ENCODE measurements at regions of chr5 and their contacts with region 1.

Region 1: DNA sequence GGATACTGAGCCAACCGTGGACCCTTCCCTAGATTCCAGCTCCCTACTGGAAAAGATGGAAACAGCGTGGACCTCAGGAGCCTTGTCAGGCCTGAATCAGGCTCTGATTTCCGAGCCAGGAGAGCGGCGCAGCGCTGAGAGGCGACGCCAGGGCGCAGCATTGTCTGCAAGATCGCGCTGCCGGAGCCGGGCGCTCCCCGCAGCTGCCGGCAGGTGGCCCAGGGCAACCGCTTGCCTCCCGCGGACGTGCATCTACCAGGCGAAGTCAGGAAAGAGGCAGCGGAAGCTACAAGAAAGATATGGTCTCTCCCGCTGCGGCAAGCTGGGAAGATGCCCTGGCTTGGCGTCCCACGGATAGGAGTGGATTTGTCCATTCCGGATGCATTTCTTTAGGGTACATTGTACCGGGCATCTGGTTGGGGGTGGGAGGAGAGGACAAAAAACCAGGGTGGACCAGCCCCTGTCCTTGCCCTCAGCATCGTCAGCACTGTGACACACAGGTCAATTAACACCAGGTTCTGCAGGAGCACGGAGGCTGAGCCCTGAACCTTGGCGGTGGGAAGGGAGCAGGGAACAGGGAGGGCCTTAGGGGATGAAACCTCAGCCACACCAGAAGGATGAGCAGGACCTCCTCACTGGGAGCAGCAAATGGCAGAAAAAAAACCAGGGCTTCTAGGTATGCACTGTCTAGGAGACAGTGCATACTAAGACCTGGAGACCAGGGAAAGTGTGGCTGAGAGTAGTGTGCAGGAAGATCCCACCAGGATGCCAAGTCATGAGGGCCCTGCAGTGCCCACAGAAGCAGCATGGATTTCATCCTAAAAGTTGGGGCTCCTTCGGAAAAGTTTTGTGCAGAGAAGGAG is 55.9 kb downstream of the SFXN1 start:
- DNase-seq: peak; percentile 97
- H3K4me3 ChIP-seq: peak overlapping the region in 1 of 8 donors; percentile 16
- H3K27ac ChIP-seq: no peak overlapping the region
- H3K4me1 ChIP-seq: peaks cover 0 to 17% (median 10%) of the 10 kb centered on the region in 6 donors
- H3K27me3 ChIP-seq: peaks cover 0 to 3% (median 0%) of the 10 kb centered on the region in 7 donors
- CTCF ChIP-seq: peak; percentile 89 to 100 (median 97)
- POLR2A ChIP-seq: no peak

Region 2: DNA sequence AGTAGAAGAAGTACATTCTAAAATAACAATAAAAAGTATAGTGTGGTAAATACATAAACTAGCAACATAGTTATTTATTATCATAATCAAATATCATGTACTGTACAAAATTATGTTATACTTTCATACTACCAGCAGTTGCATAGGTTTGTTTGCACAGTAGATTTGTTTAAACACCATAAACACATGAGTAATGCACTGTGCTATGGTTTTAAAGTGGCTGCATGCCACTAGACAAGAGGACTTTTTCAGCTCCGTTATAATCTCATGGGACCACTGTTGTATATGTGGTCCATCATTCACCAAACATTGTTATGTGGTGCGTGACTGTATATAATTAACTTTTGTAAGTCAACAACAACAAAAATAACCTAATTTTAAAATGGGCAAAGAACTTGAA is 227.9 kb before region 1 on chr5:
- intact Hi-C with region 1: no loop called
- DNase-seq: no peak
- H3K4me3 ChIP-seq: no peak overlapping the region
- H3K27ac ChIP-seq: no peak overlapping the region
- H3K4me1 ChIP-seq: no peaks in the 10 kb centered on the region
- H3K27me3 ChIP-seq: no peaks in the 10 kb centered on the region
- CTCF ChIP-seq: no peak
- POLR2A ChIP-seq: no peak

Region 3: DNA sequence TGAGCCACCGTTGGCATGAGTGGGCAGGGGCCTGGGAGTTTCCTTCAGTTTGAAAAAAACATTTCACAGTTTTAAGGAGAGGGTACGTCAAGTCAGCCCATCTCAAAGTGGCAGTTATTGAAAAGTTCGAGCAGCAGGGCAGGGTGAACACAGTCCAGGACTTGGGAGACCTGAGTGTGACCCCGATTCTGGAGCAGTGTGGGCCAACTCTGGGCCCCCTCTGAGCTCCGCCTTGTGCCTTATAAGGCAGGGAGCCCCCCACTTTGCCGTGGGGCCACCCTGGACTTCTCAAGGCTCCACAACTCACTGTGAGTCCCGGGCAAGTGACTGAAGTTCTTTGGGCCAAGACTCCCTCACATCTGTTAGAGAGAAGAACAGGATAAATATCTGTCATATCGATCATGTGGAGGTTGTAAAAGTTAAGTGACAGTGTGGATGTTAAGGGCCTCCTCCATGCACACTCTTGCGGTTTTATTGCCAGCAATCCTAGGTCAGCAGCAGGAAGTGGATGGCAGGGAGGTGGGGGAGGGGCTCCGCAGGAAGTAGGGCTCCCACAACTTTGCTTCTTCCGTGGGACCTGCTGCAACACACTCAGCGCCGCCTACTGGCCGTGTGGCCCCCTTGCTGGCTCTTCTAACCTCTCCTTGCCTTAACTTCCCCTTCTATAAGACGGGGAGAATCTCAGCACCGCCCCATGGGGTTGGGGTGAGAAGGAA is 162.0 kb after region 1 on chr5:
- intact Hi-C with region 1: loop called (anchors 10 kb)
- DNase-seq: peak; percentile 94
- H3K4me3 ChIP-seq: peak overlapping the region in 1 of 8 donors; percentile 33
- H3K27ac ChIP-seq: peak overlapping the region in 7 of 8 donors; percentile 46 to 90 (median 67)
- H3K4me1 ChIP-seq: peaks cover 0 to 57% (median 34%) of the 10 kb centered on the region in 6 donors
- H3K27me3 ChIP-seq: no peaks in the 10 kb centered on the region
- CTCF ChIP-seq: peak; percentile 56 to 95 (median 75)
- POLR2A ChIP-seq: no peak

Measured in spleen (tissue), 13 donors.